Head of caudate nucleus (tissue), 42 donors: ENCODE measurements at regions of chr7 and their contacts with region 1.

Region 1: GRCh38 chr7:105880571-105881330 is 4.4 kb upstream of the ATXN7L1 start:
- DNase-seq: no peak

Region 2: DNA sequence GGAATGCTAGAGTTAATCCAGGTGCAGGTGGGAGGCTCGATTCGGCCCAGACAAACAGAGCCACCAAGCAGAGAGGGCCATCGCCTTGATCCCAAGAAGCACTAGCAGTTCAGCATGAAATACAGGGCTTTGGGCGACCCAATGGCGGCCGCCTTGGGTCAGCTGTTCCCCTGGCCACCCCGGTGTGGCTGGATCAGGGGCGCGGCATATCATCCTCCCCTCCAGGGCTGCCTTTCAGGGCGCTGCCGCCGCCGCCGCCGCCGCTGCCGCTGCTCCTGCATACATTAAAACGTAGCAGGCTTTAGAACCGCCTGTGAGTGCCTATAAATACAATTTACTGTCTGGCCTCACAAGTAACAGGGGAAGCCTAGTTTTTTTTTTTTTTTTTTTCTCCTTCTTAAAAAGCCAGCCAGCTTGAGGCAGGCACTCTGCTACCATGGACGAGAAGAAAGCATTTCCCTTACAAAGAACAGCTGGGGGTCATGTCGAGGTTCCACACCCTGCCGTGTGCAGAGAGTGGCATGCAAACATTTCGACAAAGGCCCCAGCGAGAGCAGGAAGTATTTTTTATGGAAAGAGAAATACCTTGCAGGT is 241.8 kb before region 1 on chr7:
- intact Hi-C with region 1: loop called (anchors 5 kb)
- DNase-seq: peak in 11 of 42 donors; percentile 25 to 60 (median 47)

Region 3: DNA sequence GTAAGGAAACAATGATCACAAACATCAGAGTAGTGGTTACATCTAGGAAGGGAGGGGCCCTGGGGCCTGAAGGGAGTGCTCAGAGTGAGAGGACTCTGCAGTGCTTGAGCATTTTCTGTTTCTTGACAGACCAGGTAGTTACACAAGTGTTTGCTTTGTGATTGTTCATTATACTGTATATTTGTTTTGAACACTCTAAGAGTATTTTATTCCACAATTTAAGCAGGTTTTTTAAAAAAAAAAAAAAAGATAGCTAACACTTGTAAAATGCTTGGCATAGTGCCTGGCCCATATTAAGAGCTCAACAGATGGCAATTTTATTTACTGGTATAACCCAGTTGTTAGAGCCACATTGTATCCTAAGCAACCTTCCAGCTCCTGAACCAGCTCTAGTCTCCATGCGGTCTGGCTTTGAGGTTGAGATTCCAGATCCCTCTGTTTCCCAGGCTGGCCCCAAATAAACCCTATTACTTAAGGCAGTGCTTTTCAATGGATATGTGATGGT is 15.7 kb after region 1 on chr7:
- intact Hi-C with region 1: no loop called
- DNase-seq: no peak